B cell (primary cell): ENCODE measurements at regions of chr16 and their contacts with region 1.

Region 1: GRCh38 chr16:11181899-11182279 is 74.1 kb downstream of the SOCS1 start:
- DNase-seq: peak; percentile 67
- ATAC-seq: peak; percentile 50
- H3K4me3 ChIP-seq: no peak overlapping the region
- H3K4me3 Mint-ChIP-seq: peak overlapping the region; percentile 65
- H3K27ac ChIP-seq: no peak overlapping the region
- H3K27ac Mint-ChIP-seq: peak overlapping the region; percentile 73
- H3K4me1 ChIP-seq: peaks cover 10 to 34% of the 10 kb centered on the region in 2 donors
- H3K4me1 Mint-ChIP-seq: peaks cover 44% of the 10 kb centered on the region
- H3K27me3 ChIP-seq: no peaks in the 10 kb centered on the region
- H3K27me3 Mint-ChIP-seq: no peaks in the 10 kb centered on the region
- CTCF ChIP-seq: no peak

Region 2: DNA sequence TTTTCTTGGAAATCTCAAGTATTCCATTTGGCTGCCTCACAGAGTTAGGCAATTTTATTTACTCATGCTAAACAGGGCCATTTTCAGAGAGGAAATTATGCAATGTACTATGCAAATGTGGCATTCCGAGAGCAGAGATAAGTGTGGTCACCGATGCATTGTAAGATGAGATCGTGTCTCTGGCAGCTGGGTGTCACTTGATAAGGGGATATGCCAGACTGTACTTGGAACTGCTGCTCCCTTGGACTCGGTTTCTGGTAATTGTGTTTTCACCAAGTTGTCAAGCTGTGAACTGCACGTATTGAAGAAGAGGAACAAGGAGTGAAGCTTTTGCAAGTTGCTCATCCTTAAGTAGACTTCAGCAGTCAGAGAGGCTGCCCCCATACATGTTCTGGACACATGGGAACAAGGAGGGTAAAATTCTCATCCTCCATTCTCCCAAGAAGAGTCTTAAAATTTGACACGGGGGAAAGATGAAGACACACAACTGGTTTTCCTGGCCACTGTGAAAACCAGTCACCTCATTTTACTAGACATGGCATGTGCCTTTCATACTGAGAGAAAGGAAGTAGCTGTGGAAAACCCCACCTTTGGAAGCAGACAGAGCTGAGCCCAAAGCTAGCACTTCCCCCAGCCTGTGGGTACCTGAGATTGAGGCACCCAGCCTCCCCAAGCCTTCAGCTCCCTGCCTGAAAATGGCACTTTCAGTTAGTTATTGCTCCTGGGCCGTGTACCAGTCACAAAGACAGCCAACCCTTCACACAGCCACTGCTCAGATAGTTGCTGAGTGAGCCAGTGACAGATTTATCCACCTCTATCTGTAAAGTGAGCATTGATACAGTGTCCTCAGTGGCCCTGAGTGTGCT is 76.6 kb before region 1 on chr16:
- CTCF ChIA-PET with region 1: no interaction called
- POLR2A ChIA-PET with region 1: no interaction called
- intact Hi-C with region 1: loop called (anchors 5 kb)
- DNase-seq: peak; percentile 70
- ATAC-seq: peak; percentile 92
- H3K4me3 ChIP-seq: peak overlapping the region in 2 of 5 experiments; percentile 8
- H3K4me3 Mint-ChIP-seq: peak overlapping the region; percentile 78
- H3K27ac ChIP-seq: peak overlapping the region in 1 of 2 donors; percentile 68
- H3K27ac Mint-ChIP-seq: peak overlapping the region; percentile 83
- H3K4me1 ChIP-seq: peaks cover 18 to 23% of the 10 kb centered on the region in 2 donors
- H3K4me1 Mint-ChIP-seq: peaks cover 34% of the 10 kb centered on the region
- H3K27me3 ChIP-seq: no peaks in the 10 kb centered on the region
- H3K27me3 Mint-ChIP-seq: no peaks in the 10 kb centered on the region
- CTCF ChIP-seq: no peak

Region 3: DNA sequence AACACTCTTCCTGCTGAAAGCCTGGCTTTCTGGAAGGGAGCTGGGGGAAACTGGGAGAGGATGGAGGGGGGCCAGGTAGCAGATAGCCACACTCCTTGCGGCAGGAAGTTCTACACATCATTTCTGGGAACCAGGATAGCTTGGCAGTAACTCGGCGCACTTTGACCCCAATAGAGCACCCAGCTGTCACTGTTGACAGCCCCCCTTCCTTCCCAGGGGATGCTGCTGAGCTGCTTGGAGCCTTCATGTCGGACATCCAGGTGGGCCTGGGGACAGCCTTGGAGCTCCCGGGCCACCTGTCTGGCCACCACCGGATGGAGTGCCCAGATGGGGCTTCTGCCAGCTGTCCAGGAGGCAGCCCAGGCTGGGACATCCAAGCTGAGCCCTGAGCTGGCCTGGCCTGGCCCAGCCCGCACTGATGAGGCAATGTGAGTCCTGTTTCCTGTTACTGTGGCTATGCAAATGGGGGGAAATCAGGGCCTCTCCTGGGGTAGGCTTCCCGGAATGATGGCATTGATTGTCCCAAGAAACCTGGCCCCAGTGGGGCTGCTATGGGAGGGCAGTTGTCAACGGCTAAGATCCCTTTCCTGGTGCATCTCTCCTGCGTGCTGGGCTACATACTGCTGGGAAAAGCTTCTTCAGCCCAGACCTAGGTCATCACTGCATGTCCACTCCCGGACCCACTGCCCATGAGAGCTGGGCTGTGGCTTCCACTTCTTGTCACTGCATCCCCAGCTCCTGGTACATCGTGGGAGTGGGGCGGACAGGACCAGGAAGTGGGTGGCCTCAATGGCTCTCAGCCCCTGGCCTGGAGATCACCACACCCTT is 24.1 kb after region 1 on chr16:
- CTCF ChIA-PET with region 1: no interaction called
- POLR2A ChIA-PET with region 1: no interaction called
- intact Hi-C with region 1: no loop called
- DNase-seq: no peak
- ATAC-seq: no peak
- H3K4me3 ChIP-seq: no peak overlapping the region
- H3K4me3 Mint-ChIP-seq: peak overlapping the region; percentile 1
- H3K27ac ChIP-seq: no peak overlapping the region
- H3K27ac Mint-ChIP-seq: no peak overlapping the region
- H3K4me1 ChIP-seq: peaks cover 7 to 21% of the 10 kb centered on the region in 2 donors
- H3K4me1 Mint-ChIP-seq: peaks cover 38% of the 10 kb centered on the region
- H3K27me3 ChIP-seq: peaks cover 0 to 22% (median 5%) of the 10 kb centered on the region in 4 experiments
- H3K27me3 Mint-ChIP-seq: peaks cover 29% of the 10 kb centered on the region
- CTCF ChIP-seq: no peak

Region 4: GRCh38 chr16:11224096-11224893 is 42.4 kb after region 1 on chr16:
- CTCF ChIA-PET with region 1: interaction called, 4 read pairs
- POLR2A ChIA-PET with region 1: interaction called, 4 read pairs
- intact Hi-C with region 1: loop called (anchors 2 kb)
- DNase-seq: peak; percentile 65
- ATAC-seq: peak; percentile 34
- H3K4me3 ChIP-seq: peak overlapping the region in 1 of 5 experiments; percentile 61
- H3K4me3 Mint-ChIP-seq: peak overlapping the region; percentile 83
- H3K27ac ChIP-seq: peak overlapping the region; percentile 72 to 85
- H3K27ac Mint-ChIP-seq: peak overlapping the region; percentile 93
- H3K4me1 ChIP-seq: peaks cover 28 to 31% of the 10 kb centered on the region in 2 donors
- H3K4me1 Mint-ChIP-seq: peaks cover 34% of the 10 kb centered on the region
- H3K27me3 ChIP-seq: no peaks in the 10 kb centered on the region
- H3K27me3 Mint-ChIP-seq: no peaks in the 10 kb centered on the region
- CTCF ChIP-seq: no peak